ENCODE measurements at regions of chr15 and their contacts with region 1.

Region 1: GRCh38 chr15:85504749-85505676 is 124.6 kb downstream of the AKAP13 start:
- DNase-seq: no peak
- H3K4me3 ChIP-seq: no peak overlapping the region
- H3K27ac ChIP-seq: no peak overlapping the region
- H3K4me1 ChIP-seq: peaks cover 0 to 3% (median 0%) of the 10 kb centered on the region in 4 experiments; a peak in 1 of 7 replicates
- H3K27me3 ChIP-seq: no peaks in the 10 kb centered on the region
- CTCF ChIP-seq: peak in 1 of 3 experiments; percentile 44; a peak in 2 of 4 replicates
- EP300 ChIP-seq: no peak
- POLR2A ChIP-seq: no peak
- RAD21 ChIP-seq: peak; percentile 20 to 30; a peak in 3 of 4 replicates

Region 2: DNA sequence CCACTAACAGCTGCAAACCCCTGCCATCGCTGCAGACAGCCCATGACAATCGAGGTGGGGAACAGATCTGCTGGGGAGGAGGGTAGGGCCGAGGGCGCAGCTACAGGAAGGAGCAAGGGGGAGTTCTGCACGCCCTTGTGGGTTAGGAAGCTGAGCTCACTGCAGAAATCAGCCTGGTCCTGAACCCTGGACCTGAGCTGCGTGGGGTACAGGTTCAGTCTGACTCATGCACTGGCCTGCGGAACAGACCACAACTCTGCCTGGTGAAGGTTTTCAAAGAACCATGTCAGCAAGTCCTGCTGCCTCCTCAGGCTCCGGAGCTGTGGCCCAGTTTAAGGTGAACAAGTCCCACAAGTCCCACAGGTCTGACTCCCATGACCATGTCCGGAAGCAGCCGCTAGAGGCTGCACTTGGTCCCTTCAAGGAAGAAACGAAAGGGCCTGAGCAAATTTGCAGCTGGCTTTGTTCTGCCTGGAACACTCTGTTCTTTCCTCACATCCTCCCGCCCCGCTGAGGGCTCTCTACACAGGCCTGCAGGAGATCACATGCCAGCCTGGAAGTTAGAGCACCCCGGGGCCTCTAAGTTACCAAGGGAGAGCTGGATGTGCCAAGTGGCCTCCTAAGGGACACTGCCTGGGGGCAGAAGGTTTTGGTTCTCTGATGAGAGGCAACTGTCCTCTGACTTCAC is 174.0 kb before region 1 on chr15:
- CTCF ChIA-PET with region 1: interaction called, 11 read pairs
- POLR2A ChIA-PET with region 1: interaction called, 3 read pairs
- DNase-seq: peak; percentile 77 to 85
- H3K4me3 ChIP-seq: no peak overlapping the region
- H3K27ac ChIP-seq: no peak overlapping the region
- H3K4me1 ChIP-seq: peaks cover 0 to 4% (median 2%) of the 10 kb centered on the region in 4 experiments; a peak in 4 of 7 replicates
- H3K27me3 ChIP-seq: no peaks in the 10 kb centered on the region
- CTCF ChIP-seq: peak; percentile 86 to 98 (median 91)
- EP300 ChIP-seq: no peak
- POLR2A ChIP-seq: no peak
- RAD21 ChIP-seq: peak; percentile 95 to 97

Region 3: GRCh38 chr15:85412956-85413854 is 91.8 kb before region 1 on chr15:
- CTCF ChIA-PET with region 1: no interaction called
- POLR2A ChIA-PET with region 1: no interaction called
- DNase-seq: peak in 1 of 2 experiments; percentile 29
- H3K4me3 ChIP-seq: no peak overlapping the region
- H3K27ac ChIP-seq: no peak overlapping the region
- H3K4me1 ChIP-seq: peaks cover 2 to 7% (median 4%) of the 10 kb centered on the region in 4 experiments; a peak in 3 of 7 replicates
- H3K27me3 ChIP-seq: no peaks in the 10 kb centered on the region
- CTCF ChIP-seq: no peak
- EP300 ChIP-seq: no peak
- POLR2A ChIP-seq: no peak
- RAD21 ChIP-seq: no peak

Region 4: GRCh38 chr15:85485956-85486567 is 19.0 kb before region 1 on chr15:
- CTCF ChIA-PET with region 1: interaction called, 13 read pairs
- POLR2A ChIA-PET with region 1: interaction called, 3 read pairs
- DNase-seq: peak in 1 of 2 experiments; percentile 69
- H3K4me3 ChIP-seq: no peak overlapping the region
- H3K27ac ChIP-seq: no peak overlapping the region
- H3K4me1 ChIP-seq: peaks cover 0 to 4% (median 0%) of the 10 kb centered on the region in 4 experiments; a peak in 2 of 7 replicates
- H3K27me3 ChIP-seq: no peaks in the 10 kb centered on the region
- CTCF ChIP-seq: peak in 2 of 3 experiments; percentile 68 to 72; a peak in 3 of 4 replicates
- EP300 ChIP-seq: no peak
- POLR2A ChIP-seq: no peak
- RAD21 ChIP-seq: peak; percentile 77 to 82

Region 5: GRCh38 chr15:85554852-85555521 is 50.0 kb after region 1 on chr15:
- CTCF ChIA-PET with region 1: interaction called, 14 read pairs
- POLR2A ChIA-PET with region 1: no interaction called
- DNase-seq: no peak
- H3K4me3 ChIP-seq: no peak overlapping the region
- H3K27ac ChIP-seq: no peak overlapping the region
- H3K4me1 ChIP-seq: peaks cover 0 to 6% (median 3%) of the 10 kb centered on the region in 4 experiments; a peak in 2 of 7 replicates
- H3K27me3 ChIP-seq: no peaks in the 10 kb centered on the region
- CTCF ChIP-seq: no peak
- EP300 ChIP-seq: no peak
- POLR2A ChIP-seq: no peak
- RAD21 ChIP-seq: no peak

Measured in H1 (cell line).